ENCODE measurements at regions of chr1 and their contacts with region 1.

Region 1: GRCh38 chr1:159214149-159214760 is 9.6 kb downstream of the ACKR1 start:
- DNase-seq: no peak
- H3K4me3 ChIP-seq: no peak overlapping the region
- H3K27ac ChIP-seq: no peak overlapping the region
- H3K27me3 ChIP-seq: no peaks in the 10 kb centered on the region
- CTCF ChIP-seq: peak; percentile 95

Region 2: DNA sequence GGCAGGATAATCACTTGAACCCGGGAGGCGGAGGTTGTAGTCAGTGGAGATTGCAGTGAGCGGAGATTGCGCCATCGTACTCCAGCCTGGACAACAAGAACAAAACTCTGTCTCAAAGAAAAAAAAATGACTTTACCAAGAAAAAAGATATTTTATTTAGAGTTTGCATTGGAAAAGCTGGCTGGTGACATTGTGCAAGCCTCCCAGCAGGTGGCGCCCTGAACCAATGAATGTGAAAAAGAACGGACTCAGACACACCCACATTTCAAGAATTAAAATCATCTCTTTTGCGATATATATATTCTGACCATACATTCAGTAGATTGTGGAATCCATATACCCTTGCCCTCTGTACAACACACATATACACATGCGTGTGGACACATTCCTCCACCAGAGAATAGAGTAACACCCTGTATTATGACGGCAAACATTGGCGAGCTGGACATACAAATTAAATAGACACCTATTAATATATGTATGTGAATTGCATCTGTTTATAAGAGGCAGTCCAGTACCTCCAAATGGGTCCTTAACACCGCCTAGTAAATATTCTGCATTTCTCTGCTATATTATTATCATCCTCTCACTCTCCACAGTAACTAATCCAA is 81.9 kb before region 1 on chr1:
- CTCF ChIA-PET with region 1: interaction called, 68 read pairs
- POLR2A ChIA-PET with region 1: no interaction called
- DNase-seq: peak; percentile 26
- H3K4me3 ChIP-seq: no peak overlapping the region
- H3K27ac ChIP-seq: no peak overlapping the region
- H3K27me3 ChIP-seq: peaks cover 3% of the 10 kb centered on the region
- CTCF ChIP-seq: peak; percentile 87

Region 3: DNA sequence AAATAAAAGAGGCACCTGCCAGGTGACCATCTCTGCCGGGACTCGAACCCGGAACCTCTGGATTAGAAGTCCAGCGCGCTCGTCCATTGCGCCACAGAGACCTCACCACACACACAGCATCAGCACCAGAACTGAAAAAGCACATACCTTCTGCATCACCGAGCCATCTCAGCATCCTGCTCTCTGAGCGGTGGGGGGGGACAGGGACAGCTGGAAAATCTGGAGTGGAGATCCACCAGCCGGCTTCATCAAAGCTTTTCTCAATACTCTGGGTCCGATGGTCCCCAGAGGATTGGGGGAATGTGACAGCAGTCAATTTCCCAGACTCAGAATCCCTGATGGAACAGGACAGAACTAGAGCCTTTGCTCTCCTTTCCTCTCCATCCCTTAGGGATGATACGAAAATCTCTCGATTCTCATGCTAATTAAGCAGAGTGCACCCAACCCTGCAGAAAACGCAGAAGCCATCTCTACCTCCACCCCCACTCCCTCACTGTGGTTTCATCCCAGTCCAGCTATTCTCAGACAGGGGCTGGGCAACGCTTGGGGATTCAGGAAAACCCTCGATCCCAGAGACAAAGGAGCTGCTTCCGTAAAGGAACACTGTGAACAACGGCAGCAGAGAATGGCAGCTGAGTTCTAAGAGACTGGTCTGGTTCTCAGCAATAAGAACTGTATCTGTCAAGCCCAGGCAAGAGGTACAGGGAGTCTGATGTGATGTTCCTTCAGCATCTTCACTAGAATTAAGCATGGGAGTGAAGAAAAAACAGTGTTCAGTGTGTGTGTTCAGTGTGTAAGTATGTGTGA is 72.5 kb before region 1 on chr1:
- CTCF ChIA-PET with region 1: interaction called, 68 read pairs
- POLR2A ChIA-PET with region 1: no interaction called
- DNase-seq: no peak
- H3K4me3 ChIP-seq: peak overlapping the region; percentile 34
- H3K27ac ChIP-seq: no peak overlapping the region
- H3K27me3 ChIP-seq: peaks cover 9% of the 10 kb centered on the region
- CTCF ChIP-seq: no peak

Region 4: GRCh38 chr1:159161001-159161718 is 53.1 kb before region 1 on chr1:
- CTCF ChIA-PET with region 1: interaction called, 22 read pairs
- POLR2A ChIA-PET with region 1: no interaction called
- DNase-seq: peak; percentile 56
- H3K4me3 ChIP-seq: no peak overlapping the region
- H3K27ac ChIP-seq: no peak overlapping the region
- H3K27me3 ChIP-seq: no peaks in the 10 kb centered on the region
- CTCF ChIP-seq: peak; percentile 99

Region 5: DNA sequence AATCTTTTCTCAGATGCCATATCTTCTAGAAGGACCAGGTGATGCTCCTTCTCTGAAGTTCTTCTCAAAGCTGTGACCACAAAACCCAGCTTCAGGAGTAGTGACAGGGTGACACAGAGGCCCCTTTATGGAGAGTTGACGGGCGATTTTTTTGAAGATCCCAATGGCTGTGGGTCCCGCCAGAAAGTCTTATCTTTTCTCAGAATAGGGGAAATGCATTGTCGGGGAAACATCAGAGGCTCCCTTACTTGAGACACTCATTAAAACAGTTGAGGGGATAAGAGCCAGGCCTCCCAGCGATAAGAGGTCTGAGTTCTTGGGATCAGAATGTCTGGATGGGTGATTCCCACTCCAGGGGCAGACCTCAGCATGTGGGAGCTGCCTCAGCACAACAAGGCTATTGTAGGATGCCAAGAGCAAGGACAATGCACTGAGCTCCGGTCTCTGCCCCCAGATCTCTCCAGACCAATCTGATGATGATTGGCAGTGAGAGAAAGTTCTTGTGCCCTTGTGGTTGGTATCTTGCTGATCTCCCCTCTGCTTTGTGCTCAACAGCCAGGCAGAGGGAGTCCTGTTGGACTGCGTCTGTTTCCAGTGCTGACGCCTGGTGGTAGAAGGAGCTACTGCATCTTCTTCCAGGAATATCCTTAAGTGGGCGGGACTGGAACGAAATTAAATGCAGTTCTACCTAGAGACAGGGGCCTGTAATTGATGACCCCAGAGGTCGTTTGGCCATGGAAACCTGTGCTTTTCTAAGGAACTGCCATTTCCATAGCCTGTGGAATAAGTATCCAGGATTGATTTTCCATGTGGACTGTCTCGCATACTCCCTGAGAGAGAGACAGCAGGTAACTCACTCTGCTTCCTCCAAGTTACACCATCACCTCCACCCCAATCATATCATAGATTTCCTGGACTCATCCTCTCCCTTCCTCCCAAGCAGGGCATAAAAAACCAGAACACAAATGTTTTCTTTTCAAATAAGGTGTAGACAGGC is 16.4 kb before region 1 on chr1:
- CTCF ChIA-PET with region 1: interaction called, 31 read pairs
- POLR2A ChIA-PET with region 1: no interaction called
- DNase-seq: peak; percentile 26
- H3K4me3 ChIP-seq: no peak overlapping the region
- H3K27ac ChIP-seq: no peak overlapping the region
- H3K27me3 ChIP-seq: no peaks in the 10 kb centered on the region
- CTCF ChIP-seq: peak; percentile 98

Region 6: DNA sequence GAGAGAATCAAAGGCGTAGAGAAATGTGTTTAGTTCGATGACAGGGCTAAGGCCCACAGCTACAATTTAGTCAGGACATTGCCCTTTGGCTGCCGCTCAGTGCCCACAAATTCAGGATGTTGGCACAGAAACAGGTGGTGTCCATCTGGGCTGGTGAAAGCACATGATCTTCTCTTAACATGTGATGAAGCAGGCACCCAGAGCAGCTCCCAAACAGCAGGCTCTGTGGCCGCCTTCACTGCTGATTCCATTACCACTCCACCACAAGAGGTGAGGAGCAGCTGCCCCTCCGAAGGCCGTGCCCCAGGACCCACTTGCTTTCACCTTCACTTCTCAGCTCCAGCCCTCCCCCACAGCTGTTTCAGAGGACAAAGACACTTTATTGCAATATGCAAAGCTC is 15.2 kb after region 1 on chr1:
- CTCF ChIA-PET with region 1: interaction called, 14 read pairs
- POLR2A ChIA-PET with region 1: no interaction called
- DNase-seq: no peak
- H3K4me3 ChIP-seq: no peak overlapping the region
- H3K27ac ChIP-seq: no peak overlapping the region
- H3K27me3 ChIP-seq: no peaks in the 10 kb centered on the region
- CTCF ChIP-seq: no peak